Calu3 (cell line): ENCODE measurements at regions of chr14 and their contacts with region 1.

Region 1: DNA sequence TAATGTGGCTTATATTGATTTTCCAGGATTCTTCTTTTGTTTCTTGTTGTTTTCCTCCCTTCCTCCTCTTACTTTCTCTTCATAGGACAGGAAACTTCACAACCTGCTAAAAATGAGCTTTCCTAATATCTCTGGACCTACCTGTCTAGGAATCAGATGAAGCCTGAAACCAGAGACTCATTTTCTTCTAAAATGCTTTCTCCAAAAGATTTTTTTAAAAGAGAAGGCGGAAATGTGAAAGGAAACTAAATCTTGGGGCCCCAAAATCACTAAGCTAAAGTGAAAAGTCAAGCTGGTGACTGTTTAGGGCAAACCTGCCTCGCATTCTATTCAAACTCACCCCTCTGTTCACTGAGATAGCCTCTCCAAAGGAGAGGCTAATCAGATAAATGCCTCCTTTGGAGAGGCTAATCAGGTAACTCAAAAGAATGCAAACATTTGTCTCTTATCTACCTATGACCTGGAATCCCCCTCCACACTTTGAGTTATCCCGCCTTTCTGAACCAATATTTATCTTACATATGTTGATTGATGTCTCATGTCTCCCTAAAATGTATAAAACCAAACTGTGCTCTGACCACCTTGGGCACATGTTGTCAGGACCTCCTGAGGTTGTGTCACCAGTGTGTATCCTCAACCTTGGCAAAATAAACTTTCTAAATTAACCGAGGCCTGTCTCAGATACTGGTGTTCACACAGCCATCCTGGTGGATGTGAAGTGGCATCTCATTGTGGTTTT is 72.7 kb upstream of the HECTD1 start:
- DNase-seq: no peak
- H3K4me3 Mint-ChIP-seq: no peak overlapping the region
- H3K27ac Mint-ChIP-seq: no peak overlapping the region
- H3K4me1 Mint-ChIP-seq: peaks cover 11% of the 10 kb centered on the region
- H3K27me3 Mint-ChIP-seq: no peaks in the 10 kb centered on the region
- CTCF ChIP-seq: no peak

Region 2: GRCh38 chr14:31127690-31128089 is 152.6 kb before region 1 on chr14:
- CTCF ChIA-PET with region 1: no interaction called
- intact Hi-C with region 1: no loop called
- DNase-seq: peak; percentile 13
- H3K4me3 Mint-ChIP-seq: no peak overlapping the region
- H3K27ac Mint-ChIP-seq: peak overlapping the region; percentile 89
- H3K4me1 Mint-ChIP-seq: no peaks in the 10 kb centered on the region
- H3K27me3 Mint-ChIP-seq: no peaks in the 10 kb centered on the region
- CTCF ChIP-seq: no peak

Region 3: DNA sequence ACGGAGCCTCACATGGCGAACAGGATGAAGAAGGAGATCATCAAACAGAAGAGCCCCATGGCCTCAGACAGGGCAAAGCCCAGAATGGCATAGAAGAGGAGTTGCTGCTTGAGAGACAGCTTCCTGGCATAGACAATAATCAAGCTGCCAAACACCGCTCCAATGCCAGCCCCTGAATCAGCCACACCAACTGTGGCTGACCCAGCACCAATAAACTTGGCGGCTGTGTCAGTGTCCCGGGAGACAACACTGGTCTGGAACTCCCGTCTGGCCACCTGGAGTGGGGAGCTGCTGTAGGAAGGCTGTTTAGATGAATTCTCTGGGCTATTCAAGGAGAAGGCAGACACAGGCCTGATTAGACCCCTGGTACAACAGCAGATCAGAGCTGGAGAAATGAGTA is 39.9 kb after region 1 on chr14:
- CTCF ChIA-PET with region 1: interaction called, 11 read pairs
- intact Hi-C with region 1: no loop called
- DNase-seq: no peak
- H3K4me3 Mint-ChIP-seq: no peak overlapping the region
- H3K27ac Mint-ChIP-seq: no peak overlapping the region
- H3K4me1 Mint-ChIP-seq: no peaks in the 10 kb centered on the region
- H3K27me3 Mint-ChIP-seq: no peaks in the 10 kb centered on the region
- CTCF ChIP-seq: no peak